ENCODE measurements at regions of chr6 and their contacts with region 1.

Region 1: GRCh38 chr6:136289579-136290409 is at the start of gene BCLAF1:
- DNase-seq: peak; percentile 97 to 100 (median 100)
- ATAC-seq: peak; percentile 73 to 76
- H3K4me3 Mint-ChIP-seq: peak within 1 kb of the TSS; percentile 95 to 100 (median 99)
- H3K27ac Mint-ChIP-seq: peak within 1 kb of the TSS; percentile 99 to 100 (median 100)
- H3K4me1 Mint-ChIP-seq: peaks cover 21 to 58% (median 53%) of the 10 kb centered on the region in 4 donors
- H3K27me3 Mint-ChIP-seq: peaks cover 0 to 10% (median 0%) of the 10 kb centered on the region in 5 donors
- polyA plus RNA-seq, gene BCLAF1: 119 to 127 (median 125) TPM

Region 2: DNA sequence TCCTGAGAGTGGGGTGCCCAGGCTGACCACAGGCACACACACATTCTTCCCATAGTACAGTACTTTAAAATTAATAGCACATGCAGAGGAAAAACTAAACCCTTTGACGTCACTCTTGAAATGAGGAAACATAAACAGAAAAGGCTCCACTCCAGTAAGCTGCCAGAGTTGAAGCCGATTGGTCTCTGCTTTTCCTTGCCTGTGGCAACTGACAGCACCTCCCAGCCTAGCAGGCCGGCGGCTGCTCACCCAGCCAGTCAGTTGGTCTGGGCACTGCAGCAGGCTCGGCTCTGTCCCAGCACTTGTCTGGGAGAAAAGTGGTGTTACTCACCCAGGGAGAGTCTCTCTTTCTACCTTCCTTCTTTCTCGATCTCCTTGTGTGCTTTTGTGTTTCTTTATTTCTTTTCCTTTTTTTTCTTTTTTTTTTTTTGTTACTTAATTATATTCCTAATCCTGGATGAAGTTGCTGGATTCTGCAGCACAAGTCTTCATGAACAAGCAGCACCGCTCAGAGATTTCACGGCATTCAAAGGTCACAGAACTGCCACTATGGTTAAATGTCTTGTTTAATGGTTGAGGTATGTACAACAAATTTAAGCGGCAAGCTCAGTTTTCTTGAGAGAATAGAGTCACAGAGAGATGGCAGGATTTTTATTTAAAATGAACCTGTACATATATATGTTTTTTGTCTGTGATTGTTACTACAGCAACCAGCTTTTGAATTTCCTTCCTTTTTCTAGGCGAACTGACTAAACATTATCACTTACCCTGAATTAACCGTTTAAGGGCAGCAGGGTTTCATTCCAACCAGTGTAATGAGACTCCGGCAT is 438.1 kb before region 1 on chr6 and contains the start of gene PDE7B:
- POLR2A ChIA-PET with region 1: interaction called, 11 read pairs
- DNase-seq: peak; percentile 1 to 68 (median 32)
- ATAC-seq: peak; percentile 81 to 90
- H3K4me3 Mint-ChIP-seq: peak within 1 kb of the TSS; percentile 73 to 92 (median 84)
- H3K27ac Mint-ChIP-seq: peak within 1 kb of the TSS in 8 of 10 donors; percentile 79 to 96 (median 88)
- H3K4me1 Mint-ChIP-seq: peaks cover 1 to 43% (median 29%) of the 10 kb centered on the region in 4 donors
- H3K27me3 Mint-ChIP-seq: no peaks in the 10 kb centered on the region
- polyA plus RNA-seq, gene PDE7B: 0.12 to 0.39 (median 0.25) TPM

Region 3: DNA sequence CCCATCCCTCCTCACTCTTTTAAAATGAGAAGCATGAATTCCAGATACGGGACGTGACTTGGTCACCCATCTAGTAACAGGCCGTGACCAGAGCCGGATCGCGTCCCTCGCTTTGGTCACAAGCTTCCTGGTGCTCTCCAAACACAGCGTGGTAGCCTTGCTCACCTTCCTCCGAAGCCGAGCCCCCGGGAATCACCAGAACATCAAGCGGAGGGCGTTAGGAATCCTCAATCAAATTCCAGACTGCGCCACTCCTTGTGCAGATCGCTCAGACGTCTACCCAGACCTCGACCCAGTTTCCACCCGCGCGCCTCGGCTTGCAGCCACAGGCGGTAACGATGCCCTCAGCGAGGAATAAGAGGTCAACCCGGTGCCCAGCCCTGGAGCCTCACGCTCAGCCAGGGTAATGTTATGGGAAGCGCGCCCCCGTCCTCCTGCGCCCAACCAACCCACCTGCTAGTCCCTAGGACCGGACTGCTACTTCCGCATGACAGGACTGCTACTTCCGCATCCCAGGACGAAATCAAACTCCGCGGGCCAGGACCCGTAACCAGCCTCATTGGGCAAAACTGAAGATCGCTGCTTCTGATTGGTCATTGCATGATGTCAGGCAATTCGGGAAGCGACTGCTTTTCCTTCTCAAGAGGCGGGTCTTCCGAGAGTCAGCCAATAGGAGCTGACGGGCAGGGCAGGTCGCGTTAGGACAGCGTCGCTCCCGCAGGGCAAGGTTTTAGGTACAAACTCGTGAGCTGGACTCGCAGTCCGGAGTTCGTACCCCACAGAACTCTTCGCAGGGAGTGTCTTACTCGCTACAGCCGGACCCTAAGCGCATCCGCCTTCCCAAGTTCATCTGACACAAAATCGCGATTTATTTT is 39.7 kb before region 1 on chr6 and contains the start of gene MTFR2:
- POLR2A ChIA-PET with region 1: interaction called, 127 read pairs
- DNase-seq: peak; percentile 75 to 98 (median 94)
- ATAC-seq: peak; percentile 90 to 91
- H3K4me3 Mint-ChIP-seq: peak within 1 kb of the TSS; percentile 92 to 98 (median 96)
- H3K27ac Mint-ChIP-seq: peak within 1 kb of the TSS; percentile 18 to 97 (median 88)
- H3K4me1 Mint-ChIP-seq: peaks cover 13 to 46% (median 34%) of the 10 kb centered on the region in 4 donors
- H3K27me3 Mint-ChIP-seq: no peaks in the 10 kb centered on the region
- polyA plus RNA-seq, gene MTFR2: 0.13 to 1.0 (median 0.78) TPM

Region 4: DNA sequence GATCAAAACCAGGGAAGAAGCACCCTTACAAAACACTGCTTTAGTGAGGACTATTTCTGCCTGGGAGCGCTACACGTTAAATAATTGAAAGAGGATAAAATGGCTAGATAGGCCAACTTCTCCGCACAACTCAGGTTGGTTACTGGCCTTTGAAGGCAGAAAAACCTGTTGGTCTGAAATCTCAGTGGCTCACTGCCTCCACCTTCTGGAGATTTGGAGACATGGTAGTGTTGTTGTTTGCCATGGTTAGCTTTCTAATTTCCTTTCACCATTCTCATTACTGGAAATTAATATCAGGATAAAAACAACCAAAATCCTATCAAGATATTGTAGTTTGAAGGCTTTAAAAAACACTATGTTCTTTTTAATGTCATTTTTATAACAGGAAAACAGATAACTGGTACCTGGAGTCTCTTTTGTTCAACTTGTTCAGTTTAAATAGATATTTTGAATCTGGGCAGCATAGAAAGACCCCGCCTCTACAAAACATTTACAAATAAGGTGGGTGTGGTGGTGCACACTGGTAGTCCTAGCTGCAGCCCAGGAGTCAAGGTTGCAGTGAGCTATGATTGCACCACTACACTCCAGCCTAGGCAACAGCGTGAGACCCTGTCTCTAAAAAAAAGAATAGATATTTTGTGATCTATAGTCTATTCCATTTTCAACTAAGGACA is 27.4 kb after region 1 on chr6:
- POLR2A ChIA-PET with region 1: interaction called, 23 read pairs
- DNase-seq: peak; percentile 18 to 82 (median 66)
- ATAC-seq: peak; percentile 92 to 99
- H3K4me3 Mint-ChIP-seq: no peak overlapping the region
- H3K27ac Mint-ChIP-seq: peak overlapping the region in 1 of 10 donors; percentile 40
- H3K4me1 Mint-ChIP-seq: no peaks in the 10 kb centered on the region
- H3K27me3 Mint-ChIP-seq: peaks cover 0 to 4% (median 0%) of the 10 kb centered on the region in 5 donors

Region 5: DNA sequence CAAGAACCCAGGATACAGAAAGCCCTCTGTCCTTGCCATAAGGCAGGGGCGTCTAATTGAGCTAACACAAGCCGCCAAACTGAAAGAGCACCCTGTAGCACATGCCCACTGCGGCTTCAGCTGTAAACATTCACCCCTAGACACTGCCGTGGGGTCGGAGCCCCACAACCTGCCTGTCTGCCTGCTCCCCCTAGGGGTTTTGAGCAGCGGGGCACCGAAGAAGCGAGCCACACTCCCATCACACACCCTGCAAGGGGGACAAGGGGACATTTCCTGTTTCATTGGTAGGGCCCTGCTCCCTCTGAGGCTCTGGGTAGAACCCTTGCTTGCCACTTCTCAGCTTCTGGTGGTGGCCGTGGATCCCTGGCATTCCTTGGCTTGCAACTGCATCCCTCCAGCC is 45.1 kb after region 1 on chr6:
- POLR2A ChIA-PET with region 1: no interaction called
- DNase-seq: no peak
- ATAC-seq: no peak
- H3K4me3 Mint-ChIP-seq: no peak overlapping the region
- H3K27ac Mint-ChIP-seq: no peak overlapping the region
- H3K4me1 Mint-ChIP-seq: no peaks in the 10 kb centered on the region
- H3K27me3 Mint-ChIP-seq: peaks cover 0 to 4% (median 0%) of the 10 kb centered on the region in 5 donors

Region 6: DNA sequence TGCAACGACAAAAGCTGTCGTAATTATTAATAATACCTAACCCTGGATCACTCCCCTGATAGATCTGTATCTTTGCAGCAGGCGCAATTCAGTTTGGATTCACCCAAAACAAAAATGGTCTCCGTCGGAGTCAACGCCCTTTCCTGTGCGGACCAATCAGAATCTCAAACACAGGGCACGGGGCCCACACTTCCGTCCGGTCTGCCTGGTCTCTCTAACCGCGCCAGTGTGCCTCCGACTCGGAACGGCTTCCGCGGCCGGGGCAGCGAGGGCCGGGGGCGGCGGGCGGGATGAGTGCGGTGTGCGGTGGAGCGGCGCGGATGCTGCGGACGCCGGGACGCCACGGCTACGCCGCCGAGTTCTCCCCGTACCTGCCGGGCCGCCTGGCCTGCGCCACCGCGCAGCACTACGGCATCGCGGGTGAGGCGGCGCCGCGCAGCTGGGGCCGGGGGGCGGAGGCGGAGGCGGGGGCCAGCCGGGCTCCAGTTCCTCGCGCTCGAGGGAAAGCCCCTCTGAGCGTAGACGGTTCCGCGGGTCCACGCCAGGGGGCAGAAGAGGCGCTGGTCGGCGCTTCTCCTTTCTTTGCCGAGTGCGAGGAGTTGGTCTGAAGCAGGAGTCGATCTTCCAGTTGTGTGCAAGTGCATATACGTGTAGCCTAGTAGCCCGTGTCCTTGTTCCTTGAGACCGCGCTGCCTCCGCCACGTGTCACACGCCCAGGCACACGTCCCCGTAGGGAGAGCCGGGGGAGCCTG is 532.8 kb after region 1 on chr6 and contains the start of gene PEX7:
- POLR2A ChIA-PET with region 1: interaction called, 19 read pairs
- DNase-seq: peak; percentile 76 to 96 (median 88)
- ATAC-seq: peak; percentile 92 to 94
- H3K4me3 Mint-ChIP-seq: peak within 1 kb of the TSS; percentile 88 to 99 (median 94)
- H3K27ac Mint-ChIP-seq: peak within 1 kb of the TSS; percentile 90 to 100 (median 97)
- H3K4me1 Mint-ChIP-seq: peaks cover 14 to 51% (median 35%) of the 10 kb centered on the region in 4 donors
- H3K27me3 Mint-ChIP-seq: peaks cover 0 to 3% (median under 1%) of the 10 kb centered on the region in 5 donors
- polyA plus RNA-seq, gene PEX7: 3.0 to 4.6 (median 4.2) TPM

Measured in naive thymus-derived CD8-positive, alpha-beta T cell (primary cell).